Endothelial cell of umbilical vein (primary cell): ENCODE measurements at regions of chr12 and their contacts with region 1.

Region 1: GRCh38 chr12:22334410-22335290 is at the start of gene ST8SIA1:
- DNase-seq: no peak
- H3K4me3 ChIP-seq: peak within 1 kb of the TSS; percentile 30 to 47 (median 39)
- H3K27ac ChIP-seq: no peak within 1 kb of the TSS
- H3K4me1 ChIP-seq: no peaks in the 10 kb centered on the region
- H3K27me3 ChIP-seq: peaks cover 31 to 65% of the 10 kb centered on the region in 2 experiments
- CTCF ChIP-seq: no peak
- POLR2A ChIP-seq: no peak
- total RNA-seq, gene ST8SIA1: not detected in 2 replicates

Region 2: DNA sequence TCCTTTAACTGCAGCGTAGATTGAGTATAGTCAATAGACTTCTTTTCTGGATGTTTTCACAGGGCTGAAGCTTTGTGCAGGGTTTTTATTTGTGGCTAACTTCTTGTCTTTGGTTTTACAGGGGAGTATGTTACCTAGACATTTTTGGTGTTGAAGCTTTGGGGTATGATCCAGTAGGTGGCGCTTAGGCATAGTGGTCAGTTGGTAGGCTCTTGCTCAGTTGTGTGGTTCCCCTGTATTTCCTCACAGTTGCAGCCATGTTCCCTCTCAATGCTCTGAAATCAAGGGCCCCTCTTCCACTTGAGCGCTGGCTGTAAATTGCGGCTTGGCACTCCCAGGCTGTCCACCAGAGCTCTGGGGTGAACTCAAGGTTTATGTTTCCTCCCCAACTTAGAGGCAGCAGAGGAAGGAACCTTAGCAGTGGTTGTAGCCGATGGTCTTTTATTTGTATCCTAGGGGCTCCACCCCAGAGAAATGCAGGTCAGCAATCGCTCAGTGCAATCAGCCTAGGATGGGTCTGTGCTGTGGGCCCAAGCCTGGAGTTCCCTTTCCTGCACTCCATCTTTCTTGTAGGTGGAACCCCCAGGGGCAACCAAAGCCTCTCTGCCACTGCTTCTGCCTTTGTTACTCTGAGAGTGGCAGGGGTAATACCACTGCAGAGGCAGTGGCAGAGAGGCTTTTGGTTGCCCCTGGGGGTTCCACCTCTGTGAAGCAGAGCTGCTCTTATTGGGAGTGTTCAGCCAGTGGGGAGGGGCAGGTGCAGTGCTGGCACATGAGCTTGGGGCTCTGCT is 233.5 kb before region 1 on chr12:
- CTCF ChIA-PET with region 1: interaction called, 79 read pairs
- POLR2A ChIA-PET with region 1: no interaction called
- dilution Hi-C with region 1: no loop called
- intact Hi-C with region 1: loop called (anchors 1 kb)
- DNase-seq: peak; percentile 57
- H3K4me3 ChIP-seq: no peak overlapping the region
- H3K27ac ChIP-seq: no peak overlapping the region
- H3K4me1 ChIP-seq: peaks cover 4% of the 10 kb centered on the region
- H3K27me3 ChIP-seq: peaks cover 3 to 6% of the 10 kb centered on the region in 2 experiments
- CTCF ChIP-seq: peak; percentile 42 to 77
- POLR2A ChIP-seq: no peak

Region 3: DNA sequence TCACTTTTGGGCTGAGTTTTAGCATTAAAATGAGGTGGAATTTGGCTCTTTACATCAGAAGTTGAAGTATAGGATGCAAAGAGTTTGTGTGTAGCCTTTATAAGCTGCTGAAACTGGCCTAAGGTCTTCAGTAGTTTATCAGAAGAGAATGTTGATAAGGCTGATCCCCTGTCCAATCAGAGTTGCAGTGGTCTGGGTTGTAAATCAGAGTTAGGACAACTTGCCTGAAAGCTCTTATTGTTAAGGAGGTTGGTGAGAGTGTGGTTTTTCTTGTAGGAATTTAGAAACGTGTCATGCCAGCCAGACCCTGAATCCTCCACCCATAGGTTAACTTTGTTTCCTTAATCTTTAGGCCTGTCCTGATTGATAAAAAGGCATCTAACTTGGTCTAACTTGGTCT is 143.7 kb before region 1 on chr12:
- CTCF ChIA-PET with region 1: interaction called, 7 read pairs
- POLR2A ChIA-PET with region 1: no interaction called
- dilution Hi-C with region 1: no loop called
- intact Hi-C with region 1: loop called (anchors 5 kb)
- DNase-seq: no peak
- H3K4me3 ChIP-seq: no peak overlapping the region
- H3K27ac ChIP-seq: no peak overlapping the region
- H3K4me1 ChIP-seq: no peaks in the 10 kb centered on the region
- H3K27me3 ChIP-seq: no peaks in the 10 kb centered on the region
- CTCF ChIP-seq: no peak
- POLR2A ChIP-seq: no peak

Region 4: GRCh38 chr12:22275846-22276245 is 58.8 kb before region 1 on chr12:
- CTCF ChIA-PET with region 1: interaction called, 3 read pairs
- POLR2A ChIA-PET with region 1: no interaction called
- dilution Hi-C with region 1: no loop called
- intact Hi-C with region 1: loop called (anchors 2 kb)
- DNase-seq: peak; percentile 58
- H3K4me3 ChIP-seq: no peak overlapping the region
- H3K27ac ChIP-seq: no peak overlapping the region
- H3K4me1 ChIP-seq: peaks cover 9% of the 10 kb centered on the region
- H3K27me3 ChIP-seq: no peaks in the 10 kb centered on the region
- CTCF ChIP-seq: no peak
- POLR2A ChIP-seq: no peak

Region 5: GRCh38 chr12:22443379-22444316 is 109.0 kb after region 1 on chr12:
- CTCF ChIA-PET with region 1: interaction called, 12 read pairs
- POLR2A ChIA-PET with region 1: no interaction called
- dilution Hi-C with region 1: no loop called
- intact Hi-C with region 1: loop called (anchors 1 kb)
- DNase-seq: peak; percentile 67
- H3K4me3 ChIP-seq: no peak overlapping the region
- H3K27ac ChIP-seq: no peak overlapping the region
- H3K4me1 ChIP-seq: no peaks in the 10 kb centered on the region
- H3K27me3 ChIP-seq: peaks cover 0 to 4% of the 10 kb centered on the region in 2 experiments
- CTCF ChIP-seq: peak; percentile 58 to 67
- POLR2A ChIP-seq: no peak